ENCODE measurements at regions of chr5 and their contacts with region 1.

Region 1: DNA sequence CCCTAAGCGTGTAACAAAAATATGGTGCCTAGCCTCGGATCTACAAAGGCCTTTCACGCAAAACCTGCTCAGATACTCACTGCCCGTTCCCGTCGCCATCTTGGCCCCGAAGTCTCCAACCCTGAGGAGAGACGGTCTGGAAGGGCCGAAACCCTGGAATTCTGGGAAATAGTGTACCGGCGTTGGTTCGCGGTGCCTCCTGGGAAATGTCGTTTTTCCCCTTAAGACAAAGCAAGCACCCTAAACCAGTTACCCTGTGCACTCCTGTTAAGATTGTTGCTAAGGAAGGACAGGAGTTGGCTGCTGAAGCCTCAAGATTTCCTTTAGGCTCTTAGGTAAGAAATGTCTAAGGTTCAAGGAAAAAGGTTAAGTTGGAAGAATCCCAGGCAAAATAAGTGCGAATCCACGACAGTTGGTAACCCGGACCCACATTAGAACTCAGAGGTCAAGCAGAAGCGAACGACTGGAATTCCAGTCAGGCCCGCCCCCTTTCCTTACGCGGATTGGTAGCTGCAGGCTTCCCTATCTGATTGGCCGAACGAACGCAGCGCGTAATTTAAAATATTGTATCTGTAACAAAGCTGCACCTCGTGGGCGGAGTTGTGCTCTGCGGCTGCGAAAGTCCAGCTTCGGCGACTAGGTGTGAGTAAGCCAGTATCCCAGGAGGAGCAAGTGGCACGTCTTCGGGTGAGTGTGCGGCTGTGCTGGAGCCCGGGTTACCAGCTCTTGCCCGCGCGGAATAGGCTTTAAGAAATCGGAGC is at the starts of genes BRD8 and KIF20A:
- DNase-seq: peak; percentile 89
- H3K4me3 Mint-ChIP-seq: no peak within 1 kb of the TSS
- H3K27ac Mint-ChIP-seq: peak within 1 kb of the TSS; percentile 17
- H3K4me1 Mint-ChIP-seq: peaks cover 14% of the 10 kb centered on the region
- H3K27me3 Mint-ChIP-seq: no peaks in the 10 kb centered on the region
- total RNA-seq, gene BRD8: 45.4 and 48.4 TPM in 2 replicates
- total RNA-seq, gene KIF20A: 28.1 and 30.3 TPM in 2 replicates

Region 2: DNA sequence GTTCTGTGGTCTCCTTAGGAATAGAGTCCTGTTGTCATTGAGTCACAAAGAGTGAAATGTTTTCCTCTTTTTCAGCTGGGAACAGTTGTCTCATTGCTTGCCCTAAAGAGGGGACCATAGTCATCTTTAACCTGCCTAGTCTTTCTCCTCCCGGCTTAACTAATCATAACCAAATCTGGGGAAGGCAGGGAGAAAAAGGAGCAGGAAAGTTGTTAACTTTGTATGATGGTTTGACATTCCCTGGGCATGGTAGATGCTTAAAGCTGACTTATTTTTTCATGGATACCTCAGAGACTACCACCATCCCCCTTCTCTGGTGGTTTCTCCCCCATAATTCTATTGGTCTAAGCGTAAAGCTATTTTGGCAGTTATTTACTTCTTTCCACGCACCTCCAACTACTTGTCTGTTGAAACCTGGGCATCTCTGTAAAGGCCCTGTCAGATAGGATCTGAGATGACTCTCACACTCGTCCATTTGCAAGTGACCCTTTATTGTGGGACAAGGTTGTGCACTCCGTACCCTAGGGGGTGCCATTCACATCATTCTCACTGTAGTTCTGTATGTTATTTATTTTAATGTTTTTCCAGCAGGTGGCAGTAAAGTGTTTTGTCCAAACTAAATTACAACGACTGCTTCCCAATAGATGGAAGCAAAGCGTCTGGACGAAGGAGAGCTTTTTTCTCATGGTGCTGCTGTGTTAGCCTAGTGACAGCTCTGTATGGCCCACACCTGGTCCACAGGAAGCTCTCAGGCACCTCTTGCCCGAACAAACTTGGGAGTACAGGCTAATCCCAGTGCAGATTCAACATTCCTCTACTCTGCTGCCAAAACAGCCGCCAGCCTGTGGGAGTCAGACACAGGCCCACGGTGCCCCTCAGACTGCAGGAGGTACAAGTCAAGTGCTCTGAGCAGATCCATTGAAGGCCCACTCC is 142.8 kb before region 1 on chr5:
- intact Hi-C with region 1: loop called (anchors 1 kb)
- DNase-seq: peak; percentile 54
- H3K4me3 Mint-ChIP-seq: peak overlapping the region; percentile 44
- H3K27ac Mint-ChIP-seq: no peak overlapping the region
- H3K4me1 Mint-ChIP-seq: peaks cover 37% of the 10 kb centered on the region
- H3K27me3 Mint-ChIP-seq: no peaks in the 10 kb centered on the region

Region 3: GRCh38 chr5:138128334-138128733 is 50.4 kb before region 1 on chr5:
- intact Hi-C with region 1: no loop called
- DNase-seq: no peak
- H3K4me3 Mint-ChIP-seq: no peak overlapping the region
- H3K27ac Mint-ChIP-seq: no peak overlapping the region
- H3K4me1 Mint-ChIP-seq: no peaks in the 10 kb centered on the region
- H3K27me3 Mint-ChIP-seq: peaks cover 15% of the 10 kb centered on the region

Region 4: GRCh38 chr5:138160706-138161105 is 18.0 kb before region 1 on chr5:
- intact Hi-C with region 1: no loop called
- DNase-seq: no peak
- H3K4me3 Mint-ChIP-seq: no peak overlapping the region
- H3K27ac Mint-ChIP-seq: no peak overlapping the region
- H3K4me1 Mint-ChIP-seq: no peaks in the 10 kb centered on the region
- H3K27me3 Mint-ChIP-seq: no peaks in the 10 kb centered on the region

Region 5: GRCh38 chr5:138230981-138231589 is 52.4 kb after region 1 on chr5:
- intact Hi-C with region 1: no loop called
- DNase-seq: no peak
- H3K4me3 Mint-ChIP-seq: no peak overlapping the region
- H3K27ac Mint-ChIP-seq: no peak overlapping the region
- H3K4me1 Mint-ChIP-seq: no peaks in the 10 kb centered on the region
- H3K27me3 Mint-ChIP-seq: peaks cover 18% of the 10 kb centered on the region

Region 6: GRCh38 chr5:138331449-138332368 is 153.0 kb after region 1 on chr5 and contains the start of gene CDC25C:
- intact Hi-C with region 1: loop called (anchors 1 kb)
- DNase-seq: peak; percentile 98
- H3K4me3 Mint-ChIP-seq: peak within 1 kb of the TSS; percentile 83
- H3K27ac Mint-ChIP-seq: peak within 1 kb of the TSS; percentile 86
- H3K4me1 Mint-ChIP-seq: peaks cover 21% of the 10 kb centered on the region
- H3K27me3 Mint-ChIP-seq: no peaks in the 10 kb centered on the region
- total RNA-seq, gene CDC25C: 8.4 and 9.0 TPM in 2 replicates

Region 7: GRCh38 chr5:138408023-138408422 is 229.3 kb after region 1 on chr5:
- intact Hi-C with region 1: loop called (anchors 1 kb)
- DNase-seq: no peak
- H3K4me3 Mint-ChIP-seq: no peak overlapping the region
- H3K27ac Mint-ChIP-seq: no peak overlapping the region
- H3K4me1 Mint-ChIP-seq: peaks cover 4% of the 10 kb centered on the region
- H3K27me3 Mint-ChIP-seq: no peaks in the 10 kb centered on the region

Region 8: GRCh38 chr5:138542956-138543729 is 364.4 kb after region 1 on chr5 and contains the start of gene ETF1:
- intact Hi-C with region 1: loop called (anchors 2 kb)
- DNase-seq: peak; percentile 100
- H3K4me3 Mint-ChIP-seq: peak within 1 kb of the TSS; percentile 100
- H3K27ac Mint-ChIP-seq: peak within 1 kb of the TSS; percentile 100
- H3K4me1 Mint-ChIP-seq: peaks cover 56% of the 10 kb centered on the region
- H3K27me3 Mint-ChIP-seq: no peaks in the 10 kb centered on the region
- total RNA-seq, gene ETF1: 169 and 170 TPM in 2 replicates

Region 9: DNA sequence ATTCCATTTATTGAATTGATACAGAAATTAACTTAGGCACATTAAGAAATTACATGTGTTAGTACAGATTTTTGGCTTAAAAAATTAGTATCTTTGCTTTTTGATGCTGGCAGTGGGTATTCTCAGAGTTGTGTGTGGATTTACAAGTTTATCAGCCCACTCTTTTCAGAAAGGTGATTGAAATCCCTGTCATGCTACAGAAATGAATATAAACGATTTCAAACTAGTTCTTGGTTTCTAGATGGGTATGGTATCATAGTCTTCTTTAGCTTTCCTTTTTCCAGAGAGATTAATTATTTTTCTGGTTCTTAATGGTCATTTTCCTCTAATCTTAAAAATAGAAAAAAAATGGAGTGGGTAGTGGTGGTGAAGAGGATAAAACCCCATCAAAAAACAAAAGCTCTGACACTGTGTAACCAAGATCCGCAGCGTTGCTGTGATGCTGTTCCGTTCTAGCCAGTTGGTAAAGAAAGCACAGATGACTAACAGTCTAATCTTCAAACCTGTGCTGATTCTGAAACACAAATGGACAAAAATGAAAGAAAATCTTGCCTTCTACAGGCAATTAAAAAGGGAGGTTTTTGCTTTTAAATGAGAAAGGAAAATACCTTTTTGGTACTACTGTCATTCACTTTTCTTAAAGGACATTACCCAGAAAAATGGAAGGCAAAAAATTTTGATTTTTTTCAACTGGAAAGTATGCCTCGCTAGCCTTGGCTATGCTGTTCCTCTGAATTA is 691.2 kb after region 1 on chr5:
- intact Hi-C with region 1: no loop called
- DNase-seq: no peak
- H3K4me3 Mint-ChIP-seq: no peak overlapping the region
- H3K27ac Mint-ChIP-seq: peak overlapping the region; percentile 76
- H3K4me1 Mint-ChIP-seq: peaks cover 19% of the 10 kb centered on the region
- H3K27me3 Mint-ChIP-seq: peaks cover 15% of the 10 kb centered on the region